Activated T-helper 1 cell treated with anti-CD3 and anti-CD28 coated beads, Interleukin-12 subunit alpha, Interleukin-12 subunit beta, Interleukin-2, Interleukin-4 antibody, amounts not matched to agents 30 ng/mL and 10 ng/mL and 1 ng/mL, durations not matched to agents 14 hours and 24 hours and 36 hours (primary cell): ENCODE measurements at regions of chr3 and their contacts with region 1.

Region 1: GRCh38 chr3:13346481-13347389 is 73.4 kb downstream of the NUP210 start:
- DNase-seq: peak; percentile 59
- H3K4me3 Mint-ChIP-seq: no peak overlapping the region
- H3K27ac Mint-ChIP-seq: peak overlapping the region; percentile 74
- H3K4me1 Mint-ChIP-seq: peaks cover 52% of the 10 kb centered on the region
- H3K27me3 Mint-ChIP-seq: no peaks in the 10 kb centered on the region

Region 2: GRCh38 chr3:13324835-13325501 is 21.8 kb before region 1 on chr3:
- intact Hi-C with region 1: no loop called
- DNase-seq: no peak
- H3K4me3 Mint-ChIP-seq: no peak overlapping the region
- H3K27ac Mint-ChIP-seq: no peak overlapping the region
- H3K4me1 Mint-ChIP-seq: no peaks in the 10 kb centered on the region
- H3K27me3 Mint-ChIP-seq: no peaks in the 10 kb centered on the region

Region 3: DNA sequence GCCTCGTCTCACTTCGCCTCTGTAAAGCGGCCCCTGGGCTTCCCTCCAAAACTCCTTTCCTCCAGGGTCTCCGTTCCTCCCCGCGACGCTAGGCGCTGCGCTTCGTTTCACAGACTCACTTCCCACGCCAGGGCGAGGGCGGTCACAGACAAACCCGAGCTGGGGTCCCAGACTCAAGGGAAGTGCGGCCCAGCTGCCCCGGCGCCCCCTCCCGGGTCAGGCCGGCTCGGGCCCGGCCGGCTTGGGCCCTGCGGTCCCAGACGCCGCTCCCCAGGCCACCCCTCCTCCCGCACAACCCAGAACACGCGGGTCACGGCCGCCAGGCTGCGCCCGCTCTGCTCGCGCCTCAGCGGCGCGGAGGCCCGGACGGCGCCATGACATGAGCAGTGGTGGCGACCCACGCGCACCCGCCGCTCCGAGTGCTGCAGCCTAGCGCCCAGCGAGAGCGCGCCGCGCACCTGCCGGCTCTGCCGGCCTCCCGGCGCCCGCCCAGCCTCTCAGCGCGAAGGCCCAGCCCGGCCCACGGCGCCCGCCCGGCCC is 72.8 kb after region 1 on chr3:
- intact Hi-C with region 1: loop called (anchors 1 kb)
- DNase-seq: peak; percentile 56
- H3K4me3 Mint-ChIP-seq: peak overlapping the region; percentile 88
- H3K27ac Mint-ChIP-seq: peak overlapping the region; percentile 92
- H3K4me1 Mint-ChIP-seq: peaks cover 71% of the 10 kb centered on the region
- H3K27me3 Mint-ChIP-seq: no peaks in the 10 kb centered on the region